Activated naive CD4-positive, alpha-beta T cell treated with anti-CD3 and anti-CD28 coated beads for 36 hours (primary cell): ENCODE measurements at regions of chr1 and their contacts with region 1.

Region 1: DNA sequence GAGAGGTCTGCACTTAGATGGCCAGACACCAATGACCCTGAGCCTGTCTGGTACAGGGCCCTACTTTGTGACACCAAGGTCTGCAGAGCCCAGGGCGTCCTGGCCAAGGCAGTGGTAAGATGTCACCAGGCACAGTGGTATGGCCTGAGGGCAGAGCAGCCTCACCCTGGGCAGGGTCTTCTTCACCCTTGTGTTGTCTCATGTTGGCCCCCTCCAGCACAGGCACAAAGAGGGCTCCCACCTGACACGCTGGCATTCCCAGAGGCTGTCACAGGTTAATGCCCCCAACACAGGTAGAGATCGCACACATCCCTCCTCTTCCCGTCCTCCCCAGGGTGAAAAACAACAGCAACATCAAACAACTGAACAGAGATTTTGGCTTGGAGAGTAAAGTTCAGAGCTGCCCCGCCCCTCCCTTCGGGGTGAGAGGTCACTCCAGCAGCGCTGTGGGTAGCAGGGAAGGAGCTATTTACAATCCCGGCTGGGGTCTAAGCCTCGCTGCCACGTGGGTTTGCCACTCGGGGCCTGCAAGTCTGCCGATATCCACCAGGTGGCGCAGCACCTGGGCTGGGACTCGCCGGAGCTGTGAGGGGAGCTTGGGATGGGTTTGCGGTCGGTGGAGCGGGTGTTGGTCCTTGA is 12.6 kb downstream of the EFNA3 start:
- DNase-seq: peak; percentile 84
- H3K4me3 Mint-ChIP-seq: no peak overlapping the region
- H3K27ac Mint-ChIP-seq: no peak overlapping the region
- H3K4me1 Mint-ChIP-seq: peaks cover 6% of the 10 kb centered on the region
- H3K27me3 Mint-ChIP-seq: no peaks in the 10 kb centered on the region

Region 2: GRCh38 chr1:155077758-155078445 is 13.3 kb before region 1 on chr1:
- CTCF ChIA-PET with region 1: interaction called, 18 read pairs
- intact Hi-C with region 1: no loop called
- DNase-seq: no peak
- H3K4me3 Mint-ChIP-seq: no peak overlapping the region
- H3K27ac Mint-ChIP-seq: no peak overlapping the region
- H3K4me1 Mint-ChIP-seq: peaks cover 30% of the 10 kb centered on the region
- H3K27me3 Mint-ChIP-seq: peaks cover 26% of the 10 kb centered on the region

Region 3: DNA sequence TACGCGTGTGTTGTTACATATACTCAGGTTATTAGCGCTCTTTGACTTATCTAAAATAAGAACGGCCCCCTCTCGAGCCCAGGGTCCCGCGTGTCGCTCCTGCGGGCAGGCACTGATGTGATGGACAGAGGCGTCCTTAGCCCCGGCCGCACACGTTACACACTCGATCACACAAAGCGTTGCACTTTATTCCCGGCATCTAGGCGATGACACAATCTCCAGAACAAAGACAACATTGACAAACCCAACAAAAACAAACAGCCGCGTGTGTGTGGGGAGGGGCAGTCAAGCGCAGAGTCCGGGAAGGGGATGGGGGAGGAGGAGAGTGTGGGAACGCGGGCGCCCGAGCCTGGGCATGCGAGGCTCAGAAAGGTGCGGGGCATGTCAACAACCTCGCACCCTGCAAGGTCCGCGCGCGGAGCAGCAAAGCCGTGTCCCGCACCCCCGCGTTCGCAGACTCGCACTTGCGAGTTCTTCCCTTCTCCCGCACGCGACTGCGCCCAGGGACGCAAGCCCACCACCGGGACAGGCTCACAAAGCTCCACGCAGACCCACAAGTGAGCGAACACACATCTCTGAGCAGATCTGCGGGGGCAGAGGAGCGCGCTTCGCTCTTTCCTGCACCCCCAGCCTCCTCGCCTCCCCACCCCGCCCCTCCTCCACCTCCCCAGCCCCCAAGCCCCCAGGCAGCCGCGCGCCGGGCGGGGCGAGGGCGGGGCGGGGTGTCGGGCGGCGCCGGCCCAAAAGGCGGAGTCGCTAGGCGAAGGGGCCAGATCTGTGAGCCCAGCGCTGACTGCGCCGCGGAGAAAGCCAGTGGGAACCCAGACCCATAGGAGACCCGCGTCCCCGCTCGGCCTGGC is 36.1 kb after region 1 on chr1 and contains the start of gene EFNA1:
- CTCF ChIA-PET with region 1: interaction called, 12 read pairs
- intact Hi-C with region 1: loop called (anchors 2 kb)
- DNase-seq: peak; percentile 43
- H3K4me3 Mint-ChIP-seq: peak within 1 kb of the TSS; percentile 71
- H3K27ac Mint-ChIP-seq: peak within 1 kb of the TSS; percentile 20
- H3K4me1 Mint-ChIP-seq: peaks cover 27% of the 10 kb centered on the region
- H3K27me3 Mint-ChIP-seq: peaks cover 15% of the 10 kb centered on the region
- total RNA-seq, gene EFNA1: 0.26 to 0.32 TPM

Region 4: GRCh38 chr1:155167166-155168104 is 76.2 kb after region 1 on chr1:
- CTCF ChIA-PET with region 1: interaction called, 234 read pairs
- intact Hi-C with region 1: loop called (anchors 1 kb)
- DNase-seq: peak; percentile 95
- H3K4me3 Mint-ChIP-seq: peak overlapping the region; percentile 51
- H3K27ac Mint-ChIP-seq: no peak overlapping the region
- H3K4me1 Mint-ChIP-seq: peaks cover 24% of the 10 kb centered on the region
- H3K27me3 Mint-ChIP-seq: no peaks in the 10 kb centered on the region